ENCODE measurements at regions of chr1 and their contacts with region 1.

Region 1: DNA sequence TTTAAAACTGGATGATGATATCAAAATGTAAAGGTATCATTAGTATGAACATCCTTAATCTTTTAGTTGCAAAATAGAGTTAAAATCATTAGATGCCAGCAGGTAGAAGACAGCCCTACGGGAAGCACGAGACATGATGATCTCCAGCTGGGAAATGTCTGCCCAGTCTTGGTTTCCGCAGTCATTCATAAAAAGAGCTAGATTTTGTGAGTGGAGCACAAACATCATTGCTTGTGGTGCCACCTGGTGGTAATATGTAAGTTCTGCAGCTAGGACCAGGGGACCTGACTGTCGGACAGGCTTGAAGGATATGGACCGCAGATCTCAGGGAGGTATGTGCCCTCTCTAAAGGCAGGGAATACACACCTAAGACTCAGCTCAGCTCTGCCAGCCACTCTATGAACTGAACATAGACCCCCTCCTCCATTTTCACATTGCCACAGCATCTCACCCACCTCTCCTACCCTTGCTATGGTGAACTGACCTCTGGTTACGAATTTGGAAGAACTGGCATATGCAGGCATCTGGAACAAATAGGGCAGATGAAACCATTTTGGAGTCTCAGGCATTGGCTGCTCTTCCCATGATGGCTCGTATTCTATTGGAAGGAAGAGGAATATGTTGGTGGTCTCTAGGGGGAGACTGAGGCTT is 9.2 kb downstream of the FCMR start:
- H3K4me3 Mint-ChIP-seq: no peak overlapping the region
- H3K27ac Mint-ChIP-seq: no peak overlapping the region
- H3K4me1 Mint-ChIP-seq: peaks cover 10% of the 10 kb centered on the region
- H3K27me3 Mint-ChIP-seq: peaks cover 64% of the 10 kb centered on the region

Region 2: GRCh38 chr1:206635080-206635977 is 277.2 kb before region 1 on chr1 and contains the start of gene DYRK3:
- intact Hi-C with region 1: loop called (anchors 10 kb)
- H3K4me3 Mint-ChIP-seq: peak within 1 kb of the TSS; percentile 89
- H3K27ac Mint-ChIP-seq: peak within 1 kb of the TSS; percentile 49
- H3K4me1 Mint-ChIP-seq: peaks cover 28% of the 10 kb centered on the region
- H3K27me3 Mint-ChIP-seq: peaks cover 33% of the 10 kb centered on the region

Region 3: GRCh38 chr1:206734499-206735142 is 177.9 kb before region 1 on chr1:
- intact Hi-C with region 1: loop called (anchors 2 kb)
- H3K4me3 Mint-ChIP-seq: no peak overlapping the region
- H3K27ac Mint-ChIP-seq: no peak overlapping the region
- H3K4me1 Mint-ChIP-seq: peaks cover 82% of the 10 kb centered on the region
- H3K27me3 Mint-ChIP-seq: no peaks in the 10 kb centered on the region

Region 4: GRCh38 chr1:206865013-206865671 is 47.4 kb before region 1 on chr1 and contains the start of gene IL20:
- intact Hi-C with region 1: loop called (anchors 2 kb)
- H3K4me3 Mint-ChIP-seq: no peak within 1 kb of the TSS
- H3K27ac Mint-ChIP-seq: no peak within 1 kb of the TSS
- H3K4me1 Mint-ChIP-seq: peaks cover 2% of the 10 kb centered on the region
- H3K27me3 Mint-ChIP-seq: peaks cover 52% of the 10 kb centered on the region

Measured in dendritic cell treated with granulocyte-macrophage colony-stimulating factor and Interleukin-4, amounts not matched to agents 40 ng/mL and 50 ng/mL, for 4 days (primary cell).